Activated T-helper 1 cell treated with anti-CD3 and anti-CD28 coated beads, Interleukin-12 subunit alpha, Interleukin-12 subunit beta, Interleukin-2, Interleukin-4 antibody, amounts not matched to agents 30 ng/mL and 10 ng/mL and 1 ng/mL, durations not matched to agents 14 hours and 24 hours and 36 hours (primary cell): ENCODE measurements at regions of chr6 and their contacts with region 1.

Region 1: GRCh38 chr6:146857180-146857979 is 258.6 kb downstream of the ADGB start:
- DNase-seq: peak; percentile 66
- H3K4me3 Mint-ChIP-seq: no peak overlapping the region
- H3K27ac Mint-ChIP-seq: peak overlapping the region; percentile 54
- H3K4me1 Mint-ChIP-seq: peaks cover 36% of the 10 kb centered on the region
- H3K27me3 Mint-ChIP-seq: peaks cover 3% of the 10 kb centered on the region

Region 2: DNA sequence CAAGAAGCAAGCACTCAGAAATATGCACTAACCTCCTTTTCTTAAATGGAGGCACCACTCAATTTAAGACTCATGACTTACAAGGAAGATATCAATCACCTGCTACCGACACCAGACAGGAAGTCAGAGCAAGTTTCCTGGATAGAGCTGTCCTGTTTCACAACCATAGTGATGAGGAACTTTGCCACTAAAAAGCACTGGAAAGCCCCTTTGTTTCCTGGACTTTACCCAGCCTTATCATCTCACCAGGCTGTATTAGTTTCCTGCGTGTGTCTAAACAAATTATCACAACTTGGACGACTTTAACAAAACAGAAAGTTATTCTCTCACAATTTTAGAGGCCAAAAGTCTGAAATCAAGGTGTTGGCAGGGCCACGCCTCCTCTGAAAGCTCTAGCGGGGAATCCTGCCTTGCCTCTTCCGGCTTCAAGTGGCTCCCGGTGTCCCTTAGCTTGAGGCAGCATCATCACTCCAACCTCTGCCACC is 93.0 kb after region 1 on chr6:
- intact Hi-C with region 1: loop called (anchors 5 kb)
- DNase-seq: peak; percentile 6
- H3K4me3 Mint-ChIP-seq: no peak overlapping the region
- H3K27ac Mint-ChIP-seq: peak overlapping the region; percentile 44
- H3K4me1 Mint-ChIP-seq: peaks cover 20% of the 10 kb centered on the region
- H3K27me3 Mint-ChIP-seq: no peaks in the 10 kb centered on the region

Region 3: GRCh38 chr6:147202516-147203312 is 345.3 kb after region 1 on chr6:
- intact Hi-C with region 1: loop called (anchors 1 kb)
- DNase-seq: peak; percentile 77
- H3K4me3 Mint-ChIP-seq: peak overlapping the region; percentile 89
- H3K27ac Mint-ChIP-seq: peak overlapping the region; percentile 98
- H3K4me1 Mint-ChIP-seq: peaks cover 39% of the 10 kb centered on the region
- H3K27me3 Mint-ChIP-seq: no peaks in the 10 kb centered on the region

Region 4: GRCh38 chr6:147322299-147323162 is 465.2 kb after region 1 on chr6:
- intact Hi-C with region 1: loop called (anchors 1 kb)
- DNase-seq: peak; percentile 17
- H3K4me3 Mint-ChIP-seq: peak overlapping the region; percentile 66
- H3K27ac Mint-ChIP-seq: peak overlapping the region; percentile 87
- H3K4me1 Mint-ChIP-seq: peaks cover 18% of the 10 kb centered on the region
- H3K27me3 Mint-ChIP-seq: no peaks in the 10 kb centered on the region

Region 5: DNA sequence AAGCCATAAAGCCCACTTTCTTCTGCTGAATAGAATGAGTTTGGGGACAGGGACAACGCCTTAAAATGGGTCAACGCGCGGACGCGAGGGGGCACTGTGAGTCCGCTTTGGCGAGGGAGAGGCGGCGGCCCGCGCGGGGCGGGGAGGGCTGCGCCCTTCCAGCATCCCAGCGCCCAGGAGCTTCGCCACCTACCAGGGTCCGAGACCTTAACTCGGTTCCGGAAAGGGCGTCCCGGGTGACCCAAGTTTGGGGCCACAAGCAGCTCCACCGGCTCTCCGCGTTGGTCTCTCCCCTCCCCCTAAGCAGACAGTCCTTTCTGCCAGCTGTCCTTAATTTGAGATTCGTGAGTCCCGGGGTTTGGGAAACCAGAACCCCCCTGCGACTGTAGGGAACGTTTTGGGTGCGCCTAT is 649.3 kb after region 1 on chr6:
- intact Hi-C with region 1: loop called (anchors 5 kb)
- DNase-seq: no peak
- H3K4me3 Mint-ChIP-seq: peak overlapping the region; percentile 57
- H3K27ac Mint-ChIP-seq: no peak overlapping the region
- H3K4me1 Mint-ChIP-seq: peaks cover 7% of the 10 kb centered on the region
- H3K27me3 Mint-ChIP-seq: peaks cover 43% of the 10 kb centered on the region